ENCODE measurements at regions of chr21 and their contacts with region 1.

Region 1: DNA sequence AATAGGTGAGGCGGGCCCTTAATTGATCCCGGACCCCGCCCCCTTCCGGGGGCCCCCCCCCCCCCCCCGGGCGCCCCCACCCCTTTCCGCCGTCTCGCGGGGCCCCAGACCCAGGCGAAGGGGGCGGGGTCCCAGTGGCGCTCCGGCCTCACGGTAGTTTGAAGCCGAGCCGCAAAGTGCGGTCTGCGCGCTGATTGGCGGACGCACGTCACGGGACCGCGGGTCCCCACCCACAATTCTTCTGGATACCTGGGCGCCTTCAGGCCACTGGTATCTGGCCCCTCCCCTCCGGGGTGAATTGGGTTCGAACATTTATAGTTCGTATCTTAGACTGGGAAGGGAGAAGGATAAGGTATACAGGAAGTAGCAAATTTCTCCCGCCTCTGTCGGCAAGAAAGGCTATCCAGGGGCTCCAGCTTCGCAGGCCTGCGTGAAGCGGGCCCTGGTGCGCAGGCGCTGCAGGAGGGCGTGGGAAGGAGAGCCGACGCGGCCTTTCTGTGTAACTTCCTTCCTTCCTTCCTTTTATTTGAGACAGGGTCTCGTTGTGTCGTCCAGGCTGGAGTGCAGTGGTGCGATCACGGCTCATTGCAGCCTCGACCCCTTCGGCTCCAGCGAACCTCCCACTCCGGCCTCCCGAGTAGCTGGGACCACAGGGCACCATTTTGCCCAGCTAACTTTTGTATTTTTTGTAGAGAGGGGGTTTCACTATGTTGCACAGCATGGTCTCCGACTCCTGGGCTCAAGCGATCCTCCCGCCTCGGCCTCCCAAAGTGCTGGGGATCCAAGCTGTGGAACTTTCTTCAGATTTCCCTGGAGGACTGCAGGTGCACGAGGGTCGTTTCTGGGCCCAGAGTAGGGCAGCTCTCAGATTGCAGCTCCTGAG is 564 bp upstream of the HMGN1 start:
- DNase-seq: peak; percentile 98 to 99
- H3K4me3 ChIP-seq: peak overlapping the region; percentile 68
- H3K4me3 Mint-ChIP-seq: peak overlapping the region; percentile 96
- H3K27ac Mint-ChIP-seq: peak overlapping the region; percentile 99
- H3K4me1 ChIP-seq: peaks cover 6% of the 10 kb centered on the region
- H3K4me1 Mint-ChIP-seq: peaks cover 23% of the 10 kb centered on the region
- H3K27me3 ChIP-seq: no peaks in the 10 kb centered on the region
- H3K27me3 Mint-ChIP-seq: no peaks in the 10 kb centered on the region
- CTCF ChIP-seq: no peak

Region 2: DNA sequence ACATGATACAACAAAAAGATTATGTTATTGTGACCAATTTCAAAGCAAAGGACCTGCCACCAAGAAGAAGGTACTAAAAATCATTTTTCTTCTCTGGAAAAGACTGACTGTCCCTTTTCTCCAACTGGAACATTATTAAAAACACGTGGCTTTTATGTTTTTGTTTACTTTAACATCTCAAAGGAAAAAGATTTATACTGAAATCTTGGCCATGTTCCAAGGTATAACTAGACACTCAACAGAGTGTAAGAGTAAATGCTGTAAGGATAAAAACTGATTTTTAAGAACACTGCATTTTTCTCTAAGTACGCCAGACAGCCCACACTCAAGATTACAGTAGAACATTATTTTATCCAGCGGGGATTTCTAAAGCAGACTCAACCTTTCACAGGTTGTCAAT is 98.1 kb before region 1 on chr21:
- CTCF ChIA-PET with region 1: no interaction called
- POLR2A ChIA-PET with region 1: interaction called, 13 read pairs
- intact Hi-C with region 1: no loop called
- DNase-seq: no peak
- H3K4me3 ChIP-seq: no peak overlapping the region
- H3K4me3 Mint-ChIP-seq: no peak overlapping the region
- H3K27ac Mint-ChIP-seq: no peak overlapping the region
- H3K4me1 ChIP-seq: no peaks in the 10 kb centered on the region
- H3K4me1 Mint-ChIP-seq: no peaks in the 10 kb centered on the region
- H3K27me3 ChIP-seq: no peaks in the 10 kb centered on the region
- H3K27me3 Mint-ChIP-seq: no peaks in the 10 kb centered on the region
- CTCF ChIP-seq: no peak

Region 3: GRCh38 chr21:39313571-39314142 is 35.8 kb before region 1 on chr21 and contains the start of gene BRWD1:
- CTCF ChIA-PET with region 1: no interaction called
- POLR2A ChIA-PET with region 1: interaction called, 9 read pairs
- intact Hi-C with region 1: loop called (anchors 1 kb)
- DNase-seq: peak; percentile 90 to 92
- H3K4me3 ChIP-seq: peak within 1 kb of the TSS; percentile 86
- H3K4me3 Mint-ChIP-seq: peak within 1 kb of the TSS; percentile 97
- H3K27ac Mint-ChIP-seq: peak within 1 kb of the TSS; percentile 89
- H3K4me1 ChIP-seq: peaks cover 26% of the 10 kb centered on the region
- H3K4me1 Mint-ChIP-seq: peaks cover 21% of the 10 kb centered on the region
- H3K27me3 ChIP-seq: no peaks in the 10 kb centered on the region
- H3K27me3 Mint-ChIP-seq: no peaks in the 10 kb centered on the region
- CTCF ChIP-seq: peak; percentile 28 to 29
- total RNA-seq, gene BRWD1: 37.1 and 42.2 TPM in 2 replicates

Region 4: DNA sequence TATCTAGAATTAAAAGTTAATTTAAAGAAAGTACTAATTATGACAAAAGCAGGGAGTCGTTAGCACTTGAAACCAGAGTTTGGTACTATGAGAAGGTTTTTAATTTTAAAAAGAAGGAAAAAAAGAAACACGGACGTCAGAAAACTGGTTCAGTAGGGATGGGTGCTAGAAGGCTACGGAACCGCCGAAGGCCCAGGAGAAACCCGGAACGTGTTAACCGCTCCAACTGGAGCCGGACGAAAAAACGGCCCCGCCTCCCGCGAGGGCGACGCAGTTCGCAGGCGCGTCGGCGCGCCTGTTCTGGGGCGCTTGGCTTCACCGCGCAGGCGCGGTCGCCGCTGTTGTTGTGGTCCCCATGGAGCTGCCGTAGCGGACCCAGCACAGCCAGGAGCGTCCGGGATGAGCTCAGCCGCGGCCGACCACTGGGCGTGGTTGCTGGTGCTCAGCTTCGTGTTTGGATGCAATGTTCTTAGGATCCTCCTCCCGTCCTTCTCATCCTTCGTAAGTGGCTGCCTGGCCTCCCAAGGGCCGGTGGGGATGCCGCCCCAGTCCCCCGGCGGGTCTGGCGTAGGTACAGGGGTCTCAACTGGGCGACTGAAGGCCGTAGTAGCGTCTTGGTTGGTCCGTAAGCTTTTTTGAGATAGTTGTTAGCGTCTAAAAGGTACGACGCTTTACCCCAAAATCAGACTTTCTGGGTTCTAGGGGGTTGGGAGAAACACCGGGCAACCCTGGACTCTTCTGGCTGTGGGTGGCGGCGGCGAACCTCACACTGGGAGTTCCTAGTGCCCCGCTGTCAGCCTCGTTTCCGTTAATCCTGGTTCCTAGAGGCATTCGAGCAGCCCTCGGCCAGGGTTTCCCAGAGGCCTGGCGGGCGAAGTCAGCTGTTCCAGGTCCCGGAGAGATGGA is 30.8 kb after region 1 on chr21:
- CTCF ChIA-PET with region 1: no interaction called
- POLR2A ChIA-PET with region 1: interaction called, 5 read pairs
- intact Hi-C with region 1: loop called (anchors 2 kb)
- DNase-seq: peak; percentile 90
- H3K4me3 ChIP-seq: peak overlapping the region; percentile 45
- H3K4me3 Mint-ChIP-seq: peak overlapping the region; percentile 83
- H3K27ac Mint-ChIP-seq: peak overlapping the region; percentile 80
- H3K4me1 ChIP-seq: no peaks in the 10 kb centered on the region
- H3K4me1 Mint-ChIP-seq: peaks cover 7% of the 10 kb centered on the region
- H3K27me3 ChIP-seq: no peaks in the 10 kb centered on the region
- H3K27me3 Mint-ChIP-seq: no peaks in the 10 kb centered on the region
- CTCF ChIP-seq: no peak

Region 5: DNA sequence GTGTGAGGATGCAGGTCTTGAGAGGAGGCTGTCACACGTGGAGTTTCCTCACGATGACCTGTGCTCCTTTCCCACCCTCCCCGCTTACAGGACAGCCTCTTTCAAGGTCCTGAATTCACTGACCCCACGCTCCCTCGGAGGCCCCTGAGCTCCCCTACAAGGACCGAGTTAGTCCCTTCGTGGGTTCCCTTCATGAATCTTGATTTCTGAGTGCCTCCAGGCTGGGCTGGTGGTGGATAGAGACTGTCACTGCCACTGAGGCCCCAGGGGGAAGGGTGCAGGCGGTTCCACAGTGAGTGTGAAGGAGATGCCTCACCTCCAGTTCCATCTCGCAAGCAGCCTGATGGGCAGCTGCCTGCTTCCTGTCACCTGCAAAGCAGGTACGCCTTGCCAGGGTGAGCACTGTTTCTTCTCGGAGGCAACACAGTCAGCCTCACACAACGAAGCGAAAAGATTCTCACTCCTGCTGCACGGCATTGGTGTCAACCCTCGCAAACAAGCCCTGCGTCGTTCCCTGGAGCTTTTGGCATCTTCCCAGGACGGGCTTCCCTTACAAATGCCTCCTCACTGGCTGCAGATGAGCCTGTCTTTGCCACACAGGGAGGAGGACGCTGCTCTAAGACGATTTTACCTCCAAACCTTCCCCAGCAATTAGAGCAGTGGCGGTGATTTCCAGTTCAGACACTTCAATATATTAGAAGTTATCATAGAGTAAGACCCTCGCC is 491.1 kb after region 1 on chr21:
- CTCF ChIA-PET with region 1: no interaction called
- POLR2A ChIA-PET with region 1: no interaction called
- intact Hi-C with region 1: no loop called
- DNase-seq: no peak
- H3K4me3 ChIP-seq: no peak overlapping the region
- H3K4me3 Mint-ChIP-seq: no peak overlapping the region
- H3K27ac Mint-ChIP-seq: no peak overlapping the region
- H3K4me1 ChIP-seq: 0 out of 2 replicates have a peak, but pooled peaks cover 8% of the 10 kb centered on the region
- H3K4me1 Mint-ChIP-seq: no peaks in the 10 kb centered on the region
- H3K27me3 ChIP-seq: no peaks in the 10 kb centered on the region
- H3K27me3 Mint-ChIP-seq: no peaks in the 10 kb centered on the region
- CTCF ChIP-seq: no peak

Region 6: GRCh38 chr21:39893416-39893815 is 544.0 kb after region 1 on chr21:
- CTCF ChIA-PET with region 1: no interaction called
- POLR2A ChIA-PET with region 1: no interaction called
- intact Hi-C with region 1: no loop called
- DNase-seq: no peak
- H3K4me3 ChIP-seq: no peak overlapping the region
- H3K4me3 Mint-ChIP-seq: no peak overlapping the region
- H3K27ac Mint-ChIP-seq: no peak overlapping the region
- H3K4me1 ChIP-seq: no peaks in the 10 kb centered on the region
- H3K4me1 Mint-ChIP-seq: no peaks in the 10 kb centered on the region
- H3K27me3 ChIP-seq: no peaks in the 10 kb centered on the region
- H3K27me3 Mint-ChIP-seq: peaks cover 5% of the 10 kb centered on the region
- CTCF ChIP-seq: no peak

Measured in Caco-2 (cell line).